Activated naive CD4-positive, alpha-beta T cell treated with anti-CD3 and anti-CD28 coated beads for 36 hours (primary cell): ENCODE measurements at regions of chr7 and their contacts with region 1.

Region 1: DNA sequence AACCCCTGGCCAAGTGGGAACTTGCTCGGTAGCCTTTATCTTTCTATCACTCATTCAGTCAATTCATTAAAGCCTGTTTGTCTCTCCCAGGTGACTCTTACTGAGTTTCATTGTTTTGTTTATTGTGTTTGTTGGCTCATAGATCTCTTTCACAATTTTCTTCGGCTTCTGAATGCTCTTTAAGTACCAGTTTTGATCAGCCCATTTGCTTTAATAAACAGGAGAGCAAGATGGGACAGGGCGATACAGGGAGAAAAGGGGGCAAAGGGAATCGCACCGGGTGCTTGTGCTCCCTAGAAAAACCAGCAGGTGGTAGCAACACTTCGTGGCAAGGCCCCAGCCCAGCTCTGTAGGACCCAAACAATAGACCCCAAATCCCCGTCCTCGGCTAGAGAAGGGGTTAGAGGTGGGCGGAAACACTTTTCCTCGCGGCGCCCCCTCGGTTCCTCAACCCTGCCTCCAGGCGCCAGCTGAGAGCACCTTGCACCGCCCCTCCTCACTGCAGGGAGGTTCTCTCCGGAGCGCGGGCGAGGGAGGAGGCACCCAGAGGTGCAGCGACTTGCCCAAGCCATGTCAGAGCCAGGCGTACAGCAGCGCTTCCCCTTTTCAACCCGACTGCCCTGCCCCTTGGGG is 1.0 kb upstream of the EPHB6 start:
- DNase-seq: peak; percentile 74
- H3K4me3 Mint-ChIP-seq: peak overlapping the region; percentile 91
- H3K27ac Mint-ChIP-seq: peak overlapping the region; percentile 79
- H3K4me1 Mint-ChIP-seq: peaks cover 31% of the 10 kb centered on the region
- H3K27me3 Mint-ChIP-seq: no peaks in the 10 kb centered on the region

Region 2: DNA sequence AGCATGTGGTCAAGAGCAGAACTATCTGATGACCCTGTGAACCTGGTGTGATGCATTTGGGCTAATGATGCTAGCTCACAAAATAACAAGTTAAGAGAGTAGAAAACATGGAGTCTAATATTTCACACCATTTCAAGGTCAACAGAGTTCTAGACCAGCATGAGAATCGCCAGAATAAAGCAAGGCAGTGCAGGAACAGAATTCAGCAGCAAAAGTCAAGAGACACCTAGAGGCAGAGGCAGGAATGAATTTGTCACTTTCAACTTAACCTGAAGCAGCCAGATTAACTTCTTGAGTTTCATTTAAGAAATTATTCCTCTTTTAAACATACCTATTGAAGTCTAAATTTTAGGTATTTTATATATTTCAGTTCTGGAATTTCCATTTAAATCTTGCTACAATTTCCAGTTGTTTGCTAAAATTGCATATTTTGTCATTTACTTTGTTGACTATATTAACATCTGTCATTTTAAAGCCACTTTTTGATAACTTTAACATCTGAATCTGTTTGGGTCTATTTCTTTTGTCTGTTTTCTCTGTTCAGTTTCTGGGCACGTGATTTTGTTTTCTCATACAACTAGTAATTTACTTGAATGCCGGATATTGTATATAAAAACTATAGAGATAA is 551.8 kb before region 1 on chr7:
- CTCF ChIA-PET with region 1: interaction called, 4 read pairs
- intact Hi-C with region 1: loop called (anchors 5 kb)
- DNase-seq: no peak
- H3K4me3 Mint-ChIP-seq: no peak overlapping the region
- H3K27ac Mint-ChIP-seq: no peak overlapping the region
- H3K4me1 Mint-ChIP-seq: peaks cover 30% of the 10 kb centered on the region
- H3K27me3 Mint-ChIP-seq: peaks cover 11% of the 10 kb centered on the region

Region 3: GRCh38 chr7:142880876-142881505 is 27.1 kb after region 1 on chr7:
- CTCF ChIA-PET with region 1: interaction called, 7 read pairs
- intact Hi-C with region 1: loop called (anchors 1 kb)
- DNase-seq: peak; percentile 69
- H3K4me3 Mint-ChIP-seq: no peak overlapping the region
- H3K27ac Mint-ChIP-seq: no peak overlapping the region
- H3K4me1 Mint-ChIP-seq: peaks cover 1% of the 10 kb centered on the region
- H3K27me3 Mint-ChIP-seq: no peaks in the 10 kb centered on the region

Region 4: GRCh38 chr7:143214789-143215679 is 361.2 kb after region 1 on chr7:
- CTCF ChIA-PET with region 1: interaction called, 4 read pairs
- intact Hi-C with region 1: loop called (anchors 1 kb)
- DNase-seq: peak; percentile 73
- H3K4me3 Mint-ChIP-seq: no peak overlapping the region
- H3K27ac Mint-ChIP-seq: no peak overlapping the region
- H3K4me1 Mint-ChIP-seq: no peaks in the 10 kb centered on the region
- H3K27me3 Mint-ChIP-seq: no peaks in the 10 kb centered on the region

Region 5: DNA sequence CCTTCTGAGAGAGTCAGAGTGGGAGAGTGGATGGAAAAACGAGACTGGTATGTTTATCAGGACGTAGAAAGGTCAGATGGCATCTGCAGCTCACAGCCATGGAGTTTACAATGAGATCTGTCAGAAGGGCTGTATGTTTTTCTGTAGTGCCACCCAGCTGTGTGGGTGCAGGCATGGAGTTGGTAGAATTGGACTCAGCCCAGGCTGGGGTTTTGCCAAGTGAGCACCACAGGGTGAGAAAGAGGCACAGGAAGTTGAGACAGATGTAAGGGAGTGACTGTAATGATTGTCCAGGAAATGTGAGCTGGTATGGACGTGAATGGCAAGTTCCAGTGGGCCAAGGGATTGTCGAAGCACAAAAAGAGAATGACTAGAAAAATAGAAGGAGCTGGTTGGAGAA is 518.2 kb after region 1 on chr7:
- CTCF ChIA-PET with region 1: no interaction called
- intact Hi-C with region 1: loop called (anchors 5 kb)
- DNase-seq: peak; percentile 90
- H3K4me3 Mint-ChIP-seq: no peak overlapping the region
- H3K27ac Mint-ChIP-seq: peak overlapping the region; percentile 24
- H3K4me1 Mint-ChIP-seq: peaks cover 41% of the 10 kb centered on the region
- H3K27me3 Mint-ChIP-seq: no peaks in the 10 kb centered on the region